ENCODE measurements at regions of chr19 and their contacts with region 1.

Region 1: DNA sequence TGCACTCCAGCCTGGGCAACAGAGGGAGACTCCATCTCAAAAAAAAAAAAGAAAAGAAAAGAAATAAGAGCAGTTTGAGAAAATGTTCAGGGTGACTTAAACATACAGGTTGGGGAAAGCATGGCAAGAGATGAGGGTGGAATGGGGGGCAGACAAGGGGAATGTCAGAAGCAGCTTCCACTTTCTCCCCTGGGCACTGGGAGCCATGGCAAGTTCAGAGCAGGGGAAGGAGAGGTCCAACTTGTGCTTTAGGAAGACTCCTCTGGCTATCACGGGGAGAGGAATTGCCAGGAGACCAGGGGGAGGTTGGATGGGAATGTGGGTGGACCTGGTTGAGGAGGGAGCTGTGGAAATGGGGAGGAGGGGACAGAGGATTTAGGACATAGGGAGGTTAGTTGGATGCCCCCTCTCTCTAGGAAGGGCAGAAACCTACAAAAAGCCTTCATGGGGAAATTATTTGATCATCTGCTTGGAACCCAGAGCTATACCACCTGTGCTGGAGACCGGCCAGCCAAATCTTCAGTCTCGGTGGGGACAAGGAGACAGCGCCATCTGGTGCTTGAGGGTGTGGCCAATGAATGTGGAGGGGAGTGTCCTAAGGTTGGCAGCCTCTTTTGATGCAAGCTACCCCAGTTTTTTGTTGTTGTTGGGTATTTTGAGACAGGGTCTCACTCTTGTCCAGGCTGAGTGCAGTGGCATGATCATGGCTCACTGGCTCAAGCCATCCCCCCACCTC is 7.3 kb upstream of the STRN4 start:
- DNase-seq: peak in 2 of 5 donors; percentile 62 to 68
- H3K4me3 ChIP-seq: no peak overlapping the region
- H3K27ac ChIP-seq: no peak overlapping the region
- H3K4me1 ChIP-seq: no peaks in the 10 kb centered on the region
- H3K27me3 ChIP-seq: no peaks in the 10 kb centered on the region
- CTCF ChIP-seq: no peak
- EP300 ChIP-seq: no peak
- POLR2A ChIP-seq: no peak

Region 2: DNA sequence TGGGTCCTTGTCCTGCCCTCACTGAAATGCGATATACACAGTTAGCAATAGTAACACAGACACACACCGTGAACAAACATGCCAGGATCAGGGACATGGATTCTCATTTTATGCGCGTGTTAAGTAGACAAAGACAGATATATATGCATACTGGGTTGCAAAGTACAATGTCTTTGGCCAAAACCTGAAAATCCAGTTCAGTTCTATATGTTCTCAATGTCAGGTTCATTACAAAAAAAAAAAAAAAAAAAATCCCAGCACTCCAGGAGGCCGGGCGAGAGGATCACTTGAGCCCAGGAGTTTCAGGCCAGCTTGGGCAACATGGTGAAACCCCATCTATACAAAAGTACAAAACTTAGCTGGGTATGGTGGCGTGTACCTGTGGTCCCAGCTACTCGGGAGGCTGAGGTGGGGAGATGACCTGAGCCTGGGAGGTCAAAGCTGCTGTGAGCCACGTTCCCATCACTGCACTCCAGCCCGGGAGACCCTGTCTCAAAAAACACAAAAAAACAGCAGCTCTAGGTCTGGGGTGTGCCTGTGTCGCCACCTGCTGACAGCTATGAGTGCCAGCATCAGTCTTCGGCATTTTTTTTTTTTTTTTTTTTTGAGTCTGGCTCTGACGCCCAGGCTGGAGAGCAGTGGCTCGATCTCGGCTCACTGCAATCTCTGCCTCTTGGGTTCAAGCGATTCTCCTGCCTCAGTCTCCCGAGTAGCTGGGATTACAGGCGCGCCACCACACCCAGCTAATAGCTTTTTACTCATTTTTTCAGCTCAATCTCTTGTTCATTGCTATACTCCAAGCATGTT is 86.8 kb after region 1 on chr19:
- intact Hi-C with region 1: loop called (anchors 2 to 5 kb)
- DNase-seq: peak; percentile 51 to 77 (median 67)
- H3K4me3 ChIP-seq: no peak overlapping the region
- H3K27ac ChIP-seq: no peak overlapping the region
- H3K4me1 ChIP-seq: no peaks in the 10 kb centered on the region
- H3K27me3 ChIP-seq: no peaks in the 10 kb centered on the region
- CTCF ChIP-seq: peak; percentile 76 to 89 (median 86)
- EP300 ChIP-seq: no peak
- POLR2A ChIP-seq: no peak

Region 3: DNA sequence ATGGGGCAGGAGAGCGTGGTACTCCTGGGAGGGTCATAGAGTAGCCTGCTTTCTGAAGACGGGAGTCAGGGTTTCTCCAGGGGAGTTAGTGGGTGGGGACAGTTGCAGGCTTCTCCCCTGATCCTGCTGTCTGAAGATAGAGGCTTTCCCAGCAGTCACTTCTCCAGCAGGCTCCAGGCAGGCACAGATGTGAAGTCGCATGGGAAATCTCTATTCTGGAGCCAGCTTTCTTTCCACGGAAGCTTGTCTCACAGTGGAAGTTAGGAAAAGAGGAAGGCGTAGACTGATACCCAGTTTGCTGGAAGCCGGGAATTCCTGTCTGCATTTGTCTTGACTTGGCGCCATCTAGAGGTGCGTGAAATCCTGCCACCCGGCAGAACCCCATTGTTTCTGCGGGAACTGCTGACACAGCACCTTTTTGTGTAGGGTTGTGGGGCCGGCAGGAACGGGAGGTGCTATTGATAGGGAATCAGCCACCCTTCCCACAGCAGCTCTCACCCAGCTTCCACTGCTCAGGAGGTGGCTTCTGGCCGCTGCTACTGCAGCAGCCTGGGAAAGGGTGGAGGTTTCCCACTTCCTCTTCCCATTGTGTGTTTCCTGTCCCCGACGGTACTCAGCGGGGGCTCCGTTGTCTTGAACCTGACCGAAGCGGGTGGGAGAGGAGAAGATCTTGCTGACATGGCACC is 237.5 kb after region 1 on chr19:
- intact Hi-C with region 1: loop called (anchors 5 to 10 kb)
- DNase-seq: peak; percentile 88 to 91 (median 90)
- H3K4me3 ChIP-seq: no peak overlapping the region
- H3K27ac ChIP-seq: peak overlapping the region in 1 of 2 donors; percentile 76
- H3K4me1 ChIP-seq: peaks cover 24% of the 10 kb centered on the region
- H3K27me3 ChIP-seq: no peaks in the 10 kb centered on the region
- CTCF ChIP-seq: peak; percentile 68 to 89 (median 89)
- EP300 ChIP-seq: no peak
- POLR2A ChIP-seq: no peak